ENCODE measurements at regions of chr4 and their contacts with region 1.

Region 1: GRCh38 chr4:128287871-128288688 is 467 bp upstream of the PGRMC2 start:
- DNase-seq: peak; percentile 97 to 100 (median 98)
- ATAC-seq: peak; percentile 90
- H3K4me3 ChIP-seq: peak overlapping the region; percentile 88
- H3K4me3 Mint-ChIP-seq: peak overlapping the region; percentile 81 to 98 (median 87)
- H3K27ac ChIP-seq: peak overlapping the region; percentile 98
- H3K27ac Mint-ChIP-seq: peak overlapping the region; percentile 82 to 99 (median 96)
- H3K4me1 ChIP-seq: peaks cover 12 to 25% of the 10 kb centered on the region in 2 donors
- H3K4me1 Mint-ChIP-seq: peaks cover 26 to 50% (median 46%) of the 10 kb centered on the region in 7 donors
- H3K27me3 ChIP-seq: no peaks in the 10 kb centered on the region
- H3K27me3 Mint-ChIP-seq: no peaks in the 10 kb centered on the region

Region 2: DNA sequence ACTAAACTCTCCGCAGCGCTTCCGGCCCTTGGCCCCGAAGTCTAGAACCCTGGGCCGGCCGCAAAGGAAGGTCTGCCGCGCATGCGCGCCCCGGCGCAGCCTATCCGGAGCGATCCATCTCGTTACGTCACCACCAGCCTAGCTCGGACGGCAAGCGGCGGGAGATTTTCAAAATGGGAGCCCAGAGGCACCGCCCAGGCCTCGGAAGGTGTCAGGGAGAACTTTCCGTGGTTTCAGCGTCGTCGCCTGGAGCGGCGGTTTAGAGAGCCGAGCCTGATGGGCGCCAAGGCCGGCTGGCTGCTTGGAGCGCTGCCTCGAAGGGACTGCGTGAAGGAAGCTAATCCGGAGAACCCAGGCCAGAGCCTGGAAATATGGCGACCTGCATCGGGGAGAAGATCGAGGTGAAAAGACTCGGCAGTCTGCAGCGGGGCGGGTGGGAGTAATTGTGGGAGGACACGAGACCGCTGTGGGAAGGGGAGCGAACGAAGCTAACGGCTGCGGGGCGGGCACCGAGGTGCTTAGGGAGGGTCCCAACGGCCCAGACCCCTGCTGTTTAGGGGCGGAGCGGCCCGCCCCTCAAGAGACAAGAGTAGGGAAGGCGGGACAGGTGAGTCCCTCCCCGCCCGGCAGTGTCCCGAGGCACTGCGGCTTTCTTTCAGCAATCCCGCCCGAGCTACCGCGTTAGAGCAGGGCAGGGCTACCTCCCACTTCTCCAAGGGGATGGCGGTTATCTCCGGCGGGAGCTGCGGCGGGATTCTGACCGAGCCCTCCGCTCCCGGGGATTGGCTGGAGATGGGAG is 407.1 kb before region 1 on chr4 and contains the start of gene PLK4:
- CTCF ChIA-PET with region 1: no interaction called
- POLR2A ChIA-PET with region 1: no interaction called
- intact Hi-C with region 1: loop called (anchors 1 kb)
- DNase-seq: peak; percentile 91 to 96 (median 95)
- ATAC-seq: peak; percentile 97
- H3K4me3 ChIP-seq: peak within 1 kb of the TSS; percentile 93
- H3K4me3 Mint-ChIP-seq: peak within 1 kb of the TSS; percentile 90 to 99 (median 97)
- H3K27ac ChIP-seq: peak within 1 kb of the TSS; percentile 75
- H3K27ac Mint-ChIP-seq: peak within 1 kb of the TSS; percentile 95 to 99 (median 99)
- H3K4me1 ChIP-seq: peaks cover 4 to 10% of the 10 kb centered on the region in 2 donors
- H3K4me1 Mint-ChIP-seq: peaks cover 4 to 37% (median 28%) of the 10 kb centered on the region in 7 donors
- H3K27me3 ChIP-seq: no peaks in the 10 kb centered on the region
- H3K27me3 Mint-ChIP-seq: peaks cover 0 to 3% (median 0%) of the 10 kb centered on the region in 5 donors
- total RNA-seq, gene PLK4: 3.4 to 34.7 (median 3.9) TPM

Region 3: DNA sequence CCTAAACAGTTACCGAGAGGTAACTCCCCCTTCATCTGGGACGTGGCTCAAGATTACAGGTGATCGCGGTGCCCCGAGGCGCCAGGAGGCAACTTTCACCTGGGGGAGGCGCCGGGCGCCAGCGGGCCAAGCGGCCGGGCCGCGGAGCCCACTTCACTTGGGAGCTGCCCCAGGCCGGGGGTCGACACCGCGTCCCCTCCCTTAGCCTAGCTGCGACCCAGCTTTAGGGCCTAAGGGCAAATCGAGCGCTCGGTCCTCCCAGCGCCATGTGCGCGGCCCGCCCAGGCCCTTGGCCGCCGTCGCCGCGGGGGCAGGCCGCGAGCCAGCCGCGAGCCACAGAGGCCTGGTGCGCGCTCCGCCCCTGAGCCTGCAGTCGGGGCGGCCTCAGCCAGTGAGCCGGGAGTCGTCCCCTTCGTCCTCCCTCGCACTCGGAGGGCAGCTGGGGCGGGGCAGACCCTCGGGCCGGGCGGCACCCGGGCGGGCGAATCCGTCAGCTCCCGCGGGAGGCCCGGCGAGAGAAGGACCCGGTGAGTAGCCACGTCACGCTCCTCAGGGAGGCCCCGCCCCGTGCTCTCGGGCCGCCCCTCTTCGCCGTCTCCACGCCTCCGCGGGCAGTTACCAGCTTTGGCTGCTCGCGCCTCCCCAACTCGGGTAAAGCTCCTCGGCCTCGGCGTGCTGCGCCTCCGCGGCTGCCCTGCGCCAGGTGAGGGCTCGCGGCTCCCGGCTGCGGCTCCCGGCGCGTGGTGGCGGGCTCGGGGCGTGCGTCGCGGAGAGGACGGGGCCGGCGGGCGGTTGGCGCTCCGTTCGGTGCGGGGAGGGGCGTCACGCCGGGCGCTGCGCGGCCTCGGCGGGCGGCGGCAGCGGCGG is 227.1 kb before region 1 on chr4 and contains the start of gene LARP1B:
- CTCF ChIA-PET with region 1: no interaction called
- POLR2A ChIA-PET with region 1: interaction called, 13 read pairs
- intact Hi-C with region 1: loop called (anchors 1 kb)
- DNase-seq: peak; percentile 83 to 96 (median 89)
- ATAC-seq: peak; percentile 93
- H3K4me3 ChIP-seq: peak within 1 kb of the TSS; percentile 74
- H3K4me3 Mint-ChIP-seq: peak within 1 kb of the TSS; percentile 82 to 91 (median 88)
- H3K27ac ChIP-seq: peak within 1 kb of the TSS; percentile 90
- H3K27ac Mint-ChIP-seq: peak within 1 kb of the TSS; percentile 87 to 94 (median 91)
- H3K4me1 ChIP-seq: peaks cover 0 to 5% of the 10 kb centered on the region in 2 donors
- H3K4me1 Mint-ChIP-seq: peaks cover 0 to 16% (median 10%) of the 10 kb centered on the region in 7 donors
- H3K27me3 ChIP-seq: no peaks in the 10 kb centered on the region
- H3K27me3 Mint-ChIP-seq: peaks cover 0 to 2% (median 0%) of the 10 kb centered on the region in 5 donors
- total RNA-seq, gene LARP1B: 9.5 to 18.2 (median 13.7) TPM

Region 4: DNA sequence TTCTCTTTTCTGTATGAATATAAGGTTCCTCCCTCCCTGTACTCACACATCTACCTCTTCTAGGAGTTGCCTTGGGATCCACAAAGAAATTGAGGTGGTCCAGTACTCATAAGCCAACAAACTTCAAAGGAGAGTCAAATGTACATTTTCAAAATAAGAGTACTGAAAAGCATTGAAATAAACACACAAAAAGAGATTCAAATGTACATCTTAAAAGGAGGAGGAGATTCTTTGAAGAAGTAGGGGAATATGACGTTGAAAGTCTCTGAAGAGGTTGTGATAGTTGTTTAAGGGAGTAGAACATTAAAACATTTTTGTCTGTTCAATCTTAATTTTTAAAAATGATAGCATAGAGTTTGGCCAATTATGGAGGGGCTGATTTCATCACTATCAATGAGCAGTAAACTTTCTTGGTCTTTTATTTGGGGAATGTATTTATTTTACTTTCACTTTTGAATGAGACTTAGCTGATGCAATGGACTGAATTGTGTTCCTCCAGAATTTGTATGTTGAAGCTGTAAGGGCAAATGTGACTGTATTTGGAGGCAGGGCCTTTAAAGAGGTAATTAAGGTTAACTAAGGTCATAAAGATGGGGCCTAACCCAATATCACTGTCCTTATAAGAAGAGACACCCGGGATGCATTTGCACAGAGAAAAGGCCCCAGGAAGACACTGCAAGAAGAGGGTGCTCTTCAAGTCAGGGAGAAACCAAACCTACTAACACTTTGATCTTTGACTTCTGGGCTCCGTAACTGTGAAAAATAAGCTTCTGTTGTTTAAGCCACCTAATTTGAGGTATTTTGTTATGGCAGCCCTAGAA is 225.8 kb after region 1 on chr4:
- CTCF ChIA-PET with region 1: no interaction called
- POLR2A ChIA-PET with region 1: no interaction called
- intact Hi-C with region 1: loop called in 1 of 2 experiments (anchors 5 kb)
- DNase-seq: peak in 6 of 9 donors; percentile 0 to 32 (median 20)
- ATAC-seq: peak; percentile 27
- H3K4me3 ChIP-seq: peak overlapping the region; percentile 13
- H3K4me3 Mint-ChIP-seq: peak overlapping the region; percentile 49 to 87 (median 80)
- H3K27ac ChIP-seq: peak overlapping the region; percentile 6
- H3K27ac Mint-ChIP-seq: peak overlapping the region; percentile 71 to 91 (median 82)
- H3K4me1 ChIP-seq: no peaks in the 10 kb centered on the region
- H3K4me1 Mint-ChIP-seq: peaks cover 9 to 24% (median 19%) of the 10 kb centered on the region in 7 donors
- H3K27me3 ChIP-seq: no peaks in the 10 kb centered on the region
- H3K27me3 Mint-ChIP-seq: no peaks in the 10 kb centered on the region